ENCODE measurements at regions of chr19 and their contacts with region 1.

Region 1: GRCh38 chr19:11482384-11483050 is 1.7 kb upstream of the ELAVL3 start:
- DNase-seq: peak; percentile 97
- H3K4me3 ChIP-seq: peak overlapping the region; percentile 51 to 66
- H3K27ac ChIP-seq: peak overlapping the region in 1 of 2 experiments; percentile 88; a peak in 2 of 4 replicates
- H3K4me1 ChIP-seq: peaks cover 0 to 19% of the 10 kb centered on the region in 2 experiments; a peak in 1 of 4 replicates
- H3K27me3 ChIP-seq: peaks cover 25% of the 10 kb centered on the region; the same call in 1 of the 2 replicates
- CTCF ChIP-seq: peak; percentile 81
- EP300 ChIP-seq: peak in 1 of 2 experiments; percentile 18; a peak in 1 of 4 replicates
- RAD21 ChIP-seq: peak; percentile 81

Region 2: GRCh38 chr19:11293433-11294389 is 188.8 kb before region 1 on chr19:
- CTCF ChIA-PET with region 1: interaction called, 32 read pairs
- POLR2A ChIA-PET with region 1: interaction called, 7 read pairs
- DNase-seq: peak; percentile 96
- H3K4me3 ChIP-seq: peak overlapping the region; percentile 24 to 55; a peak in 3 of 4 replicates
- H3K27ac ChIP-seq: peak overlapping the region; percentile 44 to 75; a peak in 3 of 4 replicates
- H3K4me1 ChIP-seq: peaks cover 0 to 3% of the 10 kb centered on the region in 2 experiments; a peak in 1 of 4 replicates
- H3K27me3 ChIP-seq: no peaks in the 10 kb centered on the region
- CTCF ChIP-seq: peak; percentile 98
- EP300 ChIP-seq: no peak
- RAD21 ChIP-seq: peak; percentile 93

Region 3: GRCh38 chr19:11374433-11375142 is 107.9 kb before region 1 on chr19 and contains the start of gene SWSAP1:
- CTCF ChIA-PET with region 1: interaction called, 51 read pairs
- POLR2A ChIA-PET with region 1: interaction called, 15 read pairs
- DNase-seq: peak; percentile 92
- H3K4me3 ChIP-seq: peak within 1 kb of the TSS; percentile 58 to 62
- H3K27ac ChIP-seq: peak within 1 kb of the TSS; percentile 88 to 94
- H3K4me1 ChIP-seq: peaks cover 16 to 22% of the 10 kb centered on the region in 2 experiments
- H3K27me3 ChIP-seq: no peaks in the 10 kb centered on the region
- CTCF ChIP-seq: no peak
- EP300 ChIP-seq: no peak
- RAD21 ChIP-seq: no peak
- polyA plus RNA-seq, gene SWSAP1: 2.8 and 3.0 TPM in 2 replicates

Region 4: GRCh38 chr19:11421607-11422098 is 60.9 kb before region 1 on chr19:
- CTCF ChIA-PET with region 1: interaction called, 11 read pairs
- POLR2A ChIA-PET with region 1: interaction called, 7 read pairs
- DNase-seq: peak; percentile 77
- H3K4me3 ChIP-seq: no peak overlapping the region
- H3K27ac ChIP-seq: no peak overlapping the region
- H3K4me1 ChIP-seq: no peaks in the 10 kb centered on the region; a peak in 1 of 4 replicates
- H3K27me3 ChIP-seq: no peaks in the 10 kb centered on the region
- CTCF ChIP-seq: no peak
- EP300 ChIP-seq: no peak
- RAD21 ChIP-seq: no peak

Region 5: DNA sequence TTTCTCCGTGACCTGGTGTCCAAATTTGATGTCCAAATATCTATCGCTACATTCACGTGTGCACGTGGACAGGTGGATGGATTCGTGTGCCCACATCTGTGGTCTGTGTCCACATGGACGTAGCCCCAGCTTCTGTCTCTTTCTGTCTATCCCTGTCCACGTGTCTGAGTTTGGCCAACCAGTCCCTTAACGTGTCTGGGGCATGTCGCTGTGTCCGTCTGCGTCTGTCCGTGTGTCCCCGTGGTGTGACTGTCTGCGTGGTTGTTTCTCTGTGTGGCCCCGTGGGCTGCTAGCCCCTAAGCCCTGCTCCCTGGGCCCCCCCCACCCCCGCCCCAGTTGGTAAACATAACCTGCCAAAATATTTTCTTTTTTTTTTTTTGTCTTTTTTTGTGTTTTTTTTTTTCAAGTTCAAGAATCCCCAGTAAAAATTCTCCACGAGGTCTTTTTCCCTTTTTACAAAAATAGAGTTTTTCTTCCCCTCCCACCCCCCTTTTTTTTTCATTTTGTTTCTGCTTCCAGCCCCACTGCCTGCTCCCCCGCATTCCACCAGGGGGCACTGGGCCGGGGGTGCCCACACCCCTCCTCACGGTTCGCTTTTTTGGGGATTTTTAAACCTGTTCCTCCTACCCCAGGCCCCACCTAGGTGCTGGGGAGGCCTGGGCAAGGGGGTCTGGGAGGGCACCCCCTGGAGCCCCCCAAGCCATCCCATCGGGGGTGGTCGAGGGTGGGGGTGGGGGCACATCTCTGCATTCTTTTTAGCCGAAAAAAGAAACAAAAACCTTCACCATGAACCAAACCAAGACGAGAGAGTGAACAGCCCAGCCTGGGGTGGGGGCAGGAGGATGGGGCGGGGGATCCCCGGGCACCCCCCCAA is 28.8 kb before region 1 on chr19:
- CTCF ChIA-PET with region 1: interaction called, 22 read pairs
- POLR2A ChIA-PET with region 1: interaction called, 7 read pairs
- DNase-seq: peak; percentile 86
- H3K4me3 ChIP-seq: no peak overlapping the region; a peak in 1 of 4 replicates
- H3K27ac ChIP-seq: peak overlapping the region in 1 of 2 experiments; percentile 59; a peak in 1 of 4 replicates
- H3K4me1 ChIP-seq: no peaks in the 10 kb centered on the region
- H3K27me3 ChIP-seq: no peaks in the 10 kb centered on the region
- CTCF ChIP-seq: peak; percentile 51
- EP300 ChIP-seq: no peak
- RAD21 ChIP-seq: peak; percentile 10; the same call in 1 of the 2 replicates

Region 6: GRCh38 chr19:11496391-11497163 is 14.1 kb after region 1 on chr19:
- CTCF ChIA-PET with region 1: interaction called, 57 read pairs
- POLR2A ChIA-PET with region 1: no interaction called
- DNase-seq: peak; percentile 88
- H3K4me3 ChIP-seq: no peak overlapping the region; a peak in 1 of 4 replicates
- H3K27ac ChIP-seq: no peak overlapping the region
- H3K4me1 ChIP-seq: peaks cover 0 to 3% of the 10 kb centered on the region in 2 experiments; a peak in 1 of 4 replicates
- H3K27me3 ChIP-seq: no peaks in the 10 kb centered on the region
- CTCF ChIP-seq: peak; percentile 89
- EP300 ChIP-seq: no peak
- RAD21 ChIP-seq: peak; percentile 59